Activated CD4-positive, alpha-beta memory T cell treated with anti-CD3 and anti-CD28 coated beads for 36 hours (primary cell): ENCODE measurements at regions of chr2 and their contacts with region 1.

Region 1: DNA sequence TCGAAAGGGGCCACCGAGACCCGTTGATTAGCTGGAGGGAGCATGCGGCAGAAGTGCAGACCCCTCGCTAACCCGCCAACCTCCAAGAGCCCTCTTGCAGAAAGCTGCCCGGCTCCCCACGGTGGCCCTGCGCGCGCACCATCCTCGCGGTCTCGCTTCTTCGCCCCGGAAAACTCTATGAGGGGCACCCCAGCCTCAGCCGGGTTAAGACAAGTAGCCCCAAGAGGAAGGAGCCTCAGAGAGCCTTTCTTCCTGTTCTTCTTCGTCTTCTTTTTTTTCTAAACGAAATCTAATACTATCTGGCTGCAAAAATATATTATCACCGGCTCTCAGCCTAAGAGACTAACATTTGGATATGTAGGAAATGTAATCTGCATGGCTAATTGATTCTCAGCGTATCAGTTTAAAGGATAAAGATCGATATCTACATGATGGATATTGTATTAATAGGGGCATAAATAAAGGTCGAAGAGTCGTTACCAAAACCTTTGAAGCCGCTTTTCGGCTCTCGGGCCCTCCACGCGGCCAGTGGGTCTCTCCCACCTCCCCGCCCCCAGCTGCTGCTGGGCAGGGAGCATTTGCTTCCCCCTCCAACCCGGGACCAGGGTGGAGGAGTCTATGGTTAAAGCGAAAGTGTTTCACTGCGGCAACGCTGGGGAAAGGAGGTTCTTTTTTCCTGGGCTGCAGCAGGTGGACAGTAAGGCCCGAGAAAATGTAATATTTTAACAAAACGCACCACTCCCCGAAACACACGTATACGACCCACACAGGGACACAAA is 6.1 kb upstream of the PAX3 start:
- DNase-seq: no peak
- H3K4me3 Mint-ChIP-seq: peak overlapping the region; percentile 72
- H3K27ac Mint-ChIP-seq: peak overlapping the region; percentile 38
- H3K4me1 Mint-ChIP-seq: peaks cover 46% of the 10 kb centered on the region
- H3K27me3 Mint-ChIP-seq: peaks cover 93% of the 10 kb centered on the region

Region 2: DNA sequence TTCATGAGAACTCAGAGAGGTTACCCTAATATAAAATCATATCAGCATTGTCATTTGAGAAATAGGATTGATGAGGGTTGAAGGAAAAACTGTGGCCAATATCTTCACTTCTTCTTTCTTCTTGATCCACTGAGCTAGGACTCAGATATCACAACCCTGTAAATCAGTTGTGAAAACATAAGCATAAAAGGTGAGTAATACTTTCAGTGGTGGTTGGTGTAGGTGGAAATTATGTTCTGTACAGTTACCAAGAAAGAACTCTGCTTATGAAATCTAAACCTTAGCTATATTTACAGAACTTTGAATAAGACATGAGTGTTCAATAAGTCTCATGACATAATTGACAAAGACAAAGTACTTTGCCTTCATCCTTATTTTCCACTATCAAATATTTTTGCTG is 62.4 kb before region 1 on chr2:
- CTCF ChIA-PET with region 1: no interaction called
- POLR2A ChIA-PET with region 1: no interaction called
- intact Hi-C with region 1: loop called (anchors 5 kb)
- DNase-seq: no peak
- H3K4me3 Mint-ChIP-seq: no peak overlapping the region
- H3K27ac Mint-ChIP-seq: no peak overlapping the region
- H3K4me1 Mint-ChIP-seq: peaks cover 4% of the 10 kb centered on the region
- H3K27me3 Mint-ChIP-seq: peaks cover 42% of the 10 kb centered on the region